K562 (cell line): ENCODE measurements at regions of chr3 and their contacts with region 1.

Region 1: DNA sequence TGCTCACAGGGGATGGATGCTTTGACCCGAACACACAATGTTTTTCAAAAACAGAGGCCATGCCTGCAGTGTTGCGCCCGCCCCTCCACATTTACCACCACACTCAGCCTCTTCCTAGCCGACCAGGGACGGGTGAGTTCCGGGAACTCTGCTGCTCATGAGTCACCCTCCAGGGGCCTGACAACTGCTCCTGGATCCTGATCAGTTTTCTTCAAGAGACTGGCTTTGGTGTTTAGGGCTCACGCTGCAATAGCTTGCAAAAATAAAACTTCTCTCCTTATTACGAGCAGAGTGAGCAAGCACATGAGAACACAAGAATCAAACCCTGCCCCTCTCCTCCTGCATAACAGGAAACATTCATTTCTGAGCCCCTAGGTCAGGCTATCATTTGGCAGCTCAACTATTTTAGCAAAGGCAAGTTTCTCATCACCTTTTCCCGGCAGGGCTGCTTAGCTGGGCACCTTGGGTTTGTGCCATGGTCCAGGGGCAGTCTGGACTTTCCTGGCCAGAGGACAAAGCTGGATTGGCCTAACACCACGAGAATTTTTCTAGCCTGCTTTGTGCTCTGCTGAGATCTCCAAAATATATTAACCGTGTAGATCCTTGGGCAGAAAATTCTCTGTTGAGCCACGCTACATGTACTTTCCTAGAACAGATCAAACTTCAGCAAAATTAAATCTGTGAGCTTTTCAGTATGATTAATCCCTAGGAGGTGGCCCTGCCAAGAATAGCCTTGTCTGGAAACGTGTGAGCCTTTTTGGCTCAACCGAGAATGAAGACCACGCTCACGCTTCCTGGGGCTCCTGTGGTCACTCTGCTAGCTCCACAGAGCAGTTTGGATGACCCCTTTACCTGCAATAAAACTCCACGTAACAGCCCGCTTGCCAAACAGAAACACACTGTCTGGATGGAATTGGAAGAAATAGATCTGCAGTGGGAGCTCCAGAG is 52.7 kb upstream of the SPATA12 start:
- DNase-seq: peak; percentile 38 to 79 (median 56)
- ATAC-seq: peak; percentile 93
- H3K4me3 ChIP-seq: no peak overlapping the region
- H3K27ac ChIP-seq: peak overlapping the region; percentile 61
- H3K4me1 ChIP-seq: peaks cover 7 to 25% of the 10 kb centered on the region in 2 experiments; a peak in 3 of 5 replicates
- H3K27me3 ChIP-seq: no peaks in the 10 kb centered on the region
- CTCF ChIP-seq: no peak
- EP300 ChIP-seq: no peak; the same call in 1 of the 2 replicates
- POLR2A ChIP-seq: no peak
- RAD21 ChIP-seq: no peak

Region 2: GRCh38 chr3:57078344-57078634 is 70.5 kb after region 1 on chr3:
- CTCF ChIA-PET with region 1: no interaction called
- POLR2A ChIA-PET with region 1: no interaction called
- in situ Hi-C with region 1: no loop called
- intact Hi-C with region 1: loop called (anchors 5 kb)
- DNase-seq: peak in 3 of 4 experiments; percentile 10 to 50 (median 30)
- ATAC-seq: peak; percentile 71
- H3K4me3 ChIP-seq: peak overlapping the region; percentile 53
- H3K27ac ChIP-seq: no peak overlapping the region
- H3K4me1 ChIP-seq: peaks cover 0 to 17% of the 10 kb centered on the region in 2 experiments; a peak in 3 of 5 replicates
- H3K27me3 ChIP-seq: no peaks in the 10 kb centered on the region
- CTCF ChIP-seq: no peak
- EP300 ChIP-seq: no peak
- POLR2A ChIP-seq: no peak
- RAD21 ChIP-seq: no peak; a peak in 1 of 4 replicates

Region 3: GRCh38 chr3:57094575-57094974 is 86.8 kb after region 1 on chr3:
- CTCF ChIA-PET with region 1: interaction called, 5 read pairs
- POLR2A ChIA-PET with region 1: no interaction called
- in situ Hi-C with region 1: no loop called
- intact Hi-C with region 1: loop called (anchors 5 kb)
- DNase-seq: no peak
- ATAC-seq: no peak
- H3K4me3 ChIP-seq: no peak overlapping the region
- H3K27ac ChIP-seq: no peak overlapping the region
- H3K4me1 ChIP-seq: no peaks in the 10 kb centered on the region; a peak in 1 of 5 replicates
- H3K27me3 ChIP-seq: peaks cover 0 to 22% of the 10 kb centered on the region in 2 experiments; a peak in 2 of 5 replicates
- CTCF ChIP-seq: no peak
- EP300 ChIP-seq: no peak
- POLR2A ChIP-seq: no peak
- RAD21 ChIP-seq: no peak

Region 4: GRCh38 chr3:57274845-57275244 is 267.1 kb after region 1 on chr3:
- CTCF ChIA-PET with region 1: no interaction called
- POLR2A ChIA-PET with region 1: no interaction called
- in situ Hi-C with region 1: no loop called
- intact Hi-C with region 1: no loop called
- DNase-seq: no peak
- ATAC-seq: no peak
- H3K4me3 ChIP-seq: no peak overlapping the region
- H3K27ac ChIP-seq: no peak overlapping the region
- H3K4me1 ChIP-seq: no peaks in the 10 kb centered on the region
- H3K27me3 ChIP-seq: no peaks in the 10 kb centered on the region
- CTCF ChIP-seq: no peak
- EP300 ChIP-seq: no peak
- POLR2A ChIP-seq: no peak
- RAD21 ChIP-seq: no peak